ENCODE measurements at regions of chr17 and their contacts with region 1.

Region 1: DNA sequence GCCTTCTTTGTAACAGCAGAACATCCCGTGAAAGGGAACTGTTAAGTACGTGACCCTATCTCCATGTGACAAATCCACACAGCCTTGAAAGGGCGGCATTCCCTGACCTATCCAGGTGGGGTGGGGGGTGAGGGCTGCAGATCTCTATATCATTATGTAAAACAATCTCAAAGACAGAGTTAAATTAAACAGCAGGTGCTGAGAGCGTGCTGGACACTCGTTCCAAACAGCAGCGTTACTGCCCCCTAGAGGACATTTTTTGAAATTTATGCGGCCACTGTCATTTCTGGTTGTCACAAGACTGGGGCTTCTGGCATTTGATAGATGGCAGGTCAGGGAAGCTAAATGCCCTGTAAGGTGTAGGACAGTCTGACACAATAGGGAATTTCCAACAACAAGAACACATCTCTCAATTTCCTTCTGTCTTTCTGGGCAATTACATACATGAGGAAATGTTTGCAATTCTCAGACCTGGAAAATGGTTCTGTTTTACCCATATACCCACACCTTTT is 6.7 kb upstream of the SLC25A39 start:
- DNase-seq: peak; percentile 89
- ATAC-seq: peak; percentile 55
- H3K4me3 Mint-ChIP-seq: no peak overlapping the region
- H3K27ac Mint-ChIP-seq: no peak overlapping the region
- H3K4me1 Mint-ChIP-seq: peaks cover 14% of the 10 kb centered on the region
- H3K27me3 Mint-ChIP-seq: no peaks in the 10 kb centered on the region
- CTCF ChIP-seq: peak; percentile 88

Region 2: DNA sequence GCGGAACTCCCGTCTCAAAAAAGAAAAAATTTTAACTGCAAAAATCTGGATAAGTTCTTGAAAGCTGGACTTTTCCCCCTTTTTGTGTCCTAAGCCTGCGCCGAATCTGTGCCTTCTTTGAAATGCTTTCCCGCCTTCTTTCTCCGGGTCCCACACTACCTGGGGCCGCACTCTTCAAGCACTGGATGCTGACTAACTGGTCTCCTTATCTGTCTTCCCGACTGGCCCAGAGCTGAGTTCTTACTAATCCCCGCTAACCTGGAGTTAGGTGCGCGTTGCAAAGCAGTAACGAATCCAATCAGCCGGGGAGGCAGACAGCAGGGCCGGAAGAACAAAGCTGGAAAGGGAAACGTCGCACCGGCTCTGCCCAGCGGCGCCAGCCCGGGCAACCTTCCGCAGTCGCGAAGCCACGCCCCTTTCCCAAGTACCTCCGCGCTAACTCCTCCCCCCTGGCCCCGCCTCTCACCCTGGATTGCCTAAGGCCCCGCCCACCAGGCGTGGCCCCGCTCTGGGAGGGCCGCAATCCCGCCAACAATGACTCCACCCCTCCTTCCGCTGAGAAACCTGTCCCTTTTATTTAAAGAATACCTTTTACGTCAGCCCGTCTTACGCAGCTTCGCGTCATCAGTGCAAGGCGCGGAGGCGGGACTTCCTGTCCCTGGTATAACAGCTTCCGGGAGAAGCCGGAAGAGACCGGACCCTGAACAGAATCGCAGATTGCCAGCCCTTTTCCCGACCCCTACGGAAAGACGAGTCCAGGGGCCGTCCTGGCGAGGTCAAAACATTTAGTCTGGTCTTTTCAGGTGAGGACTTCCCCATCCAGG is 144.8 kb before region 1 on chr17 and contains the start of gene TMUB2:
- CTCF ChIA-PET with region 1: interaction called, 13 read pairs
- POLR2A ChIA-PET with region 1: interaction called, 3 read pairs
- intact Hi-C with region 1: no loop called
- DNase-seq: peak; percentile 100
- ATAC-seq: peak; percentile 98
- H3K4me3 Mint-ChIP-seq: peak within 1 kb of the TSS; percentile 100
- H3K27ac Mint-ChIP-seq: peak within 1 kb of the TSS; percentile 99
- H3K4me1 Mint-ChIP-seq: peaks cover 33% of the 10 kb centered on the region
- H3K27me3 Mint-ChIP-seq: no peaks in the 10 kb centered on the region
- CTCF ChIP-seq: no peak
- total RNA-seq, gene TMUB2: 17.5 TPM

Region 3: DNA sequence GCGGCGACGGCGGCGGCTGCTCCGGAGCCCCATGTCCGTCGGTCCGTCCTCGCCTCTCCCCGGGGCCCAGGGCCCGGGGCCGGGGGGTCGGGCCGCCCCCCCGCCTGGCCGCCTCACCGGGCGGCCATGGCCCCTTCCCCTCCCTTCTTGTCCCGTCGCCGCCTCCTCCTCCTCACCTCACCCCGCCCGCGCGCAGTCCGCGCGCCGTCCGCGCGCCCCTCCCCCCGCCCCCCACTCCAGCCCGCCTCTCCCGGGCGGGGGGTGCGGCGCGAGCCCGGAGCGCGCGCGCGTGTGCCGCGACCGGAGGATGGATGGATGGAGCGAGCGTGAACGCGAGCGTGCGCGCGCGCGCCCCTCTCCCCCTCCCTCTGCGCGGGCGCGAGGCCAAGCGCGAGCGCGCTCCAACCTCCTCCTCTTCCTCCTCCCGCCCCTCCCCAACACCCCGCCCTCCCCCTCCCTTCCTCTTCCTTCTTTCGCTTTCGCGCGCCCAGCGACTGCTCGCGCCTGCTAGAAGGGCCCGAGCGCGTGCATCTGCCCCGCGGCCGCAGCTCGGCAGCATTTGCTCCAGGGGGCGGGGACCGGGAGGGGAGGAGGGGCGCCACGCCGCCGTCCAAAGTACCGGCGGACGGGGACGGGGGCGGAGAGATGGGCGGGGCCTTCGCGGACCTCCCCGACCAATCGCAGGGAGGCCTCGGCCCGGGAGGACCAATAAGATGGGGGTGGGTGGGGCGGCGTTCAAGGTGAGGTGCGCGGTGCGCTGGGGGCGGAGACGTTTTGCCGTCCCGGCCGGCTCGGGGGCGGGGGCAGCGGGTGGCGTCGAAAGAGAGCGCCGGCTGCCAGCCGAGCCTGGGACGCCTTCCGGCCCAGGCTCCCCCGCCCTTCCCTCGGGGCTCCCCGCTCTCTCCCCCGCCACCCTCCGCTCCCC is 131.5 kb before region 1 on chr17 and contains the start of gene ATXN7L3:
- CTCF ChIA-PET with region 1: interaction called, 18 read pairs
- POLR2A ChIA-PET with region 1: no interaction called
- intact Hi-C with region 1: loop called (anchors 5 kb)
- DNase-seq: peak; percentile 100
- ATAC-seq: peak; percentile 85
- H3K4me3 Mint-ChIP-seq: peak within 1 kb of the TSS; percentile 89
- H3K27ac Mint-ChIP-seq: peak within 1 kb of the TSS; percentile 97
- H3K4me1 Mint-ChIP-seq: peaks cover 38% of the 10 kb centered on the region
- H3K27me3 Mint-ChIP-seq: no peaks in the 10 kb centered on the region
- CTCF ChIP-seq: no peak
- total RNA-seq, gene ATXN7L3: 58.1 to 62.3 TPM

Region 4: GRCh38 chr17:44314869-44315661 is 16.2 kb before region 1 on chr17:
- CTCF ChIA-PET with region 1: interaction called, 15 read pairs
- POLR2A ChIA-PET with region 1: interaction called, 6 read pairs
- intact Hi-C with region 1: no loop called
- DNase-seq: peak; percentile 70
- ATAC-seq: peak; percentile 75
- H3K4me3 Mint-ChIP-seq: peak overlapping the region; percentile 70
- H3K27ac Mint-ChIP-seq: no peak overlapping the region
- H3K4me1 Mint-ChIP-seq: peaks cover 12% of the 10 kb centered on the region
- H3K27me3 Mint-ChIP-seq: peaks cover 30% of the 10 kb centered on the region
- CTCF ChIP-seq: no peak

Region 5: DNA sequence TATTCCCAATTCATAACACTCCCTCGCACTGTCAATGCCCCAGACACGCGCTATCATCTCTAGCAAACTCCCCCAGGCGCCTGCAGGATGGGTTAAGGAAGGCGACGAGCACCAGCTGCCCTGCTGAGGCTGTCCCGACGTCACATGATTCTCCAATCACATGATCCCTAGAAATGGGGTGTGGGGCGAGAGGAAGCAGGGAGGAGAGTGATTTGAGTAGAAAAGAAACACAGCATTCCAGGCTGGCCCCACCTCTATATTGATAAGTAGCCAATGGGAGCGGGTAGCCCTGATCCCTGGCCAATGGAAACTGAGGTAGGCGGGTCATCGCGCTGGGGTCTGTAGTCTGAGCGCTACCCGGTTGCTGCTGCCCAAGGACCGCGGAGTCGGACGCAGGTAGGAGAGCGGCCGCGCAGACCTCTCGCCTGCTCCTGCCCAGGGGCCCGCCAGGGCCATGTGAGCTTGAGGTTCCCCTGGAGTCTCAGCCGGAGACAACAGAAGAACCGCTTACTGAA is 13.7 kb after region 1 on chr17 and contains the start of gene GRN:
- CTCF ChIA-PET with region 1: interaction called, 59 read pairs
- POLR2A ChIA-PET with region 1: interaction called, 4 read pairs
- intact Hi-C with region 1: no loop called
- DNase-seq: peak; percentile 95
- ATAC-seq: peak; percentile 99
- H3K4me3 Mint-ChIP-seq: peak within 1 kb of the TSS; percentile 93
- H3K27ac Mint-ChIP-seq: peak within 1 kb of the TSS; percentile 81
- H3K4me1 Mint-ChIP-seq: peaks cover 19% of the 10 kb centered on the region
- H3K27me3 Mint-ChIP-seq: no peaks in the 10 kb centered on the region
- CTCF ChIP-seq: no peak
- total RNA-seq, gene GRN: 34.8 to 35.5 TPM

Region 6: DNA sequence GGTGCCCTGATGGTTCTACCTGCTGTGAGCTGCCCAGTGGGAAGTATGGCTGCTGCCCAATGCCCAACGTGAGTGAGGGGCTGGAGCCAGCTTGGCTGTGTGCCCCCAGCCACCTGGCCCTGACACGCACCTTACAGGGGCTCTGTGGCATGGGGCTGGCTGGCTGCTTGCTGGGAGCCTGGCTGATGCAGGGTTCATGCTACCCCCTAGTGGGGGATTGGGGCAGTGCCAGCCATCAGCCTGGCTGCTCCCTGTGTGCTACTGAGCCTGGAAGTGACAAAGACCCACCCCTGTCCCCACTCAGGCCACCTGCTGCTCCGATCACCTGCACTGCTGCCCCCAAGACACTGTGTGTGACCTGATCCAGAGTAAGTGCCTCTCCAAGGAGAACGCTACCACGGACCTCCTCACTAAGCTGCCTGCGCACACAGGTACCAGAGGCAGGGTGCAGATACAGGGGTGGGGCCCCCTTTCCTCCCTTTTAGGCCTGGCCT is 19.5 kb after region 1 on chr17:
- CTCF ChIA-PET with region 1: interaction called, 59 read pairs
- POLR2A ChIA-PET with region 1: interaction called, 4 read pairs
- intact Hi-C with region 1: no loop called
- DNase-seq: peak; percentile 86
- ATAC-seq: peak; percentile 90
- H3K4me3 Mint-ChIP-seq: no peak overlapping the region
- H3K27ac Mint-ChIP-seq: no peak overlapping the region
- H3K4me1 Mint-ChIP-seq: peaks cover 11% of the 10 kb centered on the region
- H3K27me3 Mint-ChIP-seq: no peaks in the 10 kb centered on the region
- CTCF ChIP-seq: peak; percentile 80

Measured in activated CD8-positive, alpha-beta T cell treated with anti-CD3 and anti-CD28 coated beads for 36 hours (primary cell).